PC-3 (cell line): ENCODE measurements at regions of chr15 and their contacts with region 1.

Region 1: GRCh38 chr15:48992545-48992944 is 28.8 kb upstream of the SHC4 start:
- DNase-seq: no peak
- ATAC-seq: no peak
- H3K4me3 ChIP-seq: no peak overlapping the region
- H3K27ac ChIP-seq: no peak overlapping the region
- H3K4me1 ChIP-seq: no peaks in the 10 kb centered on the region
- H3K27me3 ChIP-seq: no peaks in the 10 kb centered on the region
- CTCF ChIP-seq: no peak

Region 2: GRCh38 chr15:49036650-49037545 is 44.4 kb after region 1 on chr15:
- CTCF ChIA-PET with region 1: interaction called, 10 read pairs
- POLR2A ChIA-PET with region 1: interaction called, 18 read pairs
- intact Hi-C with region 1: no loop called
- DNase-seq: peak; percentile 76
- ATAC-seq: peak; percentile 91
- H3K4me3 ChIP-seq: no peak overlapping the region
- H3K27ac ChIP-seq: no peak overlapping the region
- H3K4me1 ChIP-seq: peaks cover 29% of the 10 kb centered on the region
- H3K27me3 ChIP-seq: no peaks in the 10 kb centered on the region
- CTCF ChIP-seq: no peak

Region 3: DNA sequence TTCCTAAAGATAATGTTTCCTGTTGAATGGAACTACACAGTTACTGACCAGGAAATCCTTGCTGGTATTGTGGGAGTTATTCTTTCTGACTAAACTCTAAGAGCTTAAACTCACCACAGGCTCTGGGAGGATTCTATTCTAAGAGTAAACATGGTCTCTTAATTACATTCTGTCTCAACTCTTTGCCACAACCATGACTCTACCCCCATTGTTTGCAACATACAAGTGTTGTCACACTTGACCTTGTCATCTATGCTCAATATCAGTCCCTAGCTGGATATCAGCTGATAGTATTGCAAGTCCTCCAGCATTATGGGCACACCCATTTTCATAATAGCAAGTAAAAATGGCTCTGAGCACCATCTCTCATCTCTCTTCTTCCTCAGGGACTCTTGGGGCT is 83.3 kb after region 1 on chr15:
- CTCF ChIA-PET with region 1: no interaction called
- POLR2A ChIA-PET with region 1: no interaction called
- intact Hi-C with region 1: no loop called
- DNase-seq: no peak
- ATAC-seq: no peak
- H3K4me3 ChIP-seq: no peak overlapping the region
- H3K27ac ChIP-seq: no peak overlapping the region
- H3K4me1 ChIP-seq: no peaks in the 10 kb centered on the region
- H3K27me3 ChIP-seq: no peaks in the 10 kb centered on the region
- CTCF ChIP-seq: no peak